CD4-positive, alpha-beta memory T cell (primary cell): ENCODE measurements at regions of chr11 and their contacts with region 1.

Region 1: GRCh38 chr11:117946842-117947526 is 17.8 kb upstream of the TMPRSS13 start:
- DNase-seq: peak; percentile 70 to 77 (median 72)
- H3K4me3 ChIP-seq: no peak overlapping the region
- H3K4me3 Mint-ChIP-seq: peak overlapping the region in 7 of 8 donors; percentile 7 to 85 (median 47)
- H3K27ac ChIP-seq: no peak overlapping the region
- H3K27ac Mint-ChIP-seq: peak overlapping the region; percentile 38 to 97 (median 82)
- H3K4me1 ChIP-seq: peaks cover 73% of the 10 kb centered on the region
- H3K4me1 Mint-ChIP-seq: peaks cover 54 to 83% (median 70%) of the 10 kb centered on the region in 4 donors
- H3K27me3 ChIP-seq: no peaks in the 10 kb centered on the region
- H3K27me3 Mint-ChIP-seq: no peaks in the 10 kb centered on the region

Region 2: GRCh38 chr11:117634756-117635603 is 312.0 kb before region 1 on chr11:
- CTCF ChIA-PET with region 1: no interaction called
- POLR2A ChIA-PET with region 1: no interaction called
- intact Hi-C with region 1: no loop called
- DNase-seq: no peak
- H3K4me3 ChIP-seq: no peak overlapping the region
- H3K4me3 Mint-ChIP-seq: peak overlapping the region in 1 of 8 donors; percentile 37
- H3K27ac ChIP-seq: no peak overlapping the region
- H3K27ac Mint-ChIP-seq: no peak overlapping the region
- H3K4me1 ChIP-seq: no peaks in the 10 kb centered on the region
- H3K4me1 Mint-ChIP-seq: no peaks in the 10 kb centered on the region
- H3K27me3 ChIP-seq: no peaks in the 10 kb centered on the region
- H3K27me3 Mint-ChIP-seq: peaks cover 7 to 8% of the 10 kb centered on the region in 2 donors

Region 3: GRCh38 chr11:117807482-117808327 is 139.3 kb before region 1 on chr11:
- CTCF ChIA-PET with region 1: interaction called, 173 read pairs
- POLR2A ChIA-PET with region 1: interaction called, 15 read pairs
- intact Hi-C with region 1: loop called (anchors 1 kb)
- DNase-seq: peak; percentile 58 to 70 (median 62)
- H3K4me3 ChIP-seq: no peak overlapping the region
- H3K4me3 Mint-ChIP-seq: no peak overlapping the region
- H3K27ac ChIP-seq: no peak overlapping the region
- H3K27ac Mint-ChIP-seq: peak overlapping the region in 1 of 7 donors; percentile 45
- H3K4me1 ChIP-seq: peaks cover 10% of the 10 kb centered on the region
- H3K4me1 Mint-ChIP-seq: peaks cover 7 to 17% (median 10%) of the 10 kb centered on the region in 4 donors
- H3K27me3 ChIP-seq: no peaks in the 10 kb centered on the region
- H3K27me3 Mint-ChIP-seq: peaks cover 0 to 3% of the 10 kb centered on the region in 2 donors

Region 4: DNA sequence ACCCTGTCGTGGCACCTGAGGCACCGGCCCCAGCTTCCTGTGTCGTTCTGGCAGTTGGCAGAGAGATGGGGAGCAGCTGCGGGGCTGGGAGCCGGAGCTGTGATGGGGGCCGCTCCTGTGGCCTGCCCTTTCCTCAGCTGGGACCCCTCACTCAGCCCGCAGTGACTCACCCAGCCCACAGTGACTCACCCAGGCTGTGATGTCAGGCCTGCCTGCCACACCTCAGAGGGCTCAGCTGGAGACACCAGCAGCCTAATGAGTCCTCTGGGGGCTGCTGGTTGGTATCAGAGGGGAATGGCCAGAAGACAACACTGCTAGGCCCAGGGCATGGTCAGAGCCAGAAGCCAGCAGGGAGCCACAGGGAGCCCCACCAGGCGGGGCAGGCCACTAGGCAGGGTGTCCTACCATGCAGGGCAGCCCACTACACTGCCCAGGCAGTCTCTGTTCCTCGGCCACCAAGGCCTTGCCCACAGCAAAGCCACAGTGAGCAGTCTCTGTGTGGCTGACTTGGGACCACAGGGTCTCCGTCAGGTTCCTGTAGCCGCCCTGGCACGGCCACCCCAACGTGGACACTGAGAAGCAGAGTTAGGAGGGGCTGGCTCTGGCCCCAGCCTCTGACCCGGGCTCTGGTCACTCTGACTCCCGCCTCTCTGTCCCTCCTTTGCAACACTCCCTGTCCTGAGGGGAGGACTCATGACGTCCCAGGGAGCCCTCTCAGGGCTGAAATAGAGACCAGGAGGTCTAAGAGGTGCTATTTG is 118.2 kb before region 1 on chr11:
- CTCF ChIA-PET with region 1: interaction called, 216 read pairs
- POLR2A ChIA-PET with region 1: interaction called, 21 read pairs
- intact Hi-C with region 1: loop called (anchors 1 kb)
- DNase-seq: peak; percentile 49 to 91 (median 59)
- H3K4me3 ChIP-seq: no peak overlapping the region
- H3K4me3 Mint-ChIP-seq: peak overlapping the region in 4 of 8 donors; percentile 24 to 65 (median 44)
- H3K27ac ChIP-seq: peak overlapping the region; percentile 44
- H3K27ac Mint-ChIP-seq: peak overlapping the region; percentile 65 to 87 (median 79)
- H3K4me1 ChIP-seq: peaks cover 40% of the 10 kb centered on the region
- H3K4me1 Mint-ChIP-seq: peaks cover 19 to 69% (median 40%) of the 10 kb centered on the region in 4 donors
- H3K27me3 ChIP-seq: no peaks in the 10 kb centered on the region
- H3K27me3 Mint-ChIP-seq: no peaks in the 10 kb centered on the region

Region 5: GRCh38 chr11:117851106-117851505 is 95.9 kb before region 1 on chr11:
- CTCF ChIA-PET with region 1: interaction called, 226 read pairs
- POLR2A ChIA-PET with region 1: interaction called, 4 read pairs
- intact Hi-C with region 1: no loop called
- DNase-seq: no peak
- H3K4me3 ChIP-seq: no peak overlapping the region
- H3K4me3 Mint-ChIP-seq: no peak overlapping the region
- H3K27ac ChIP-seq: no peak overlapping the region
- H3K27ac Mint-ChIP-seq: no peak overlapping the region
- H3K4me1 ChIP-seq: no peaks in the 10 kb centered on the region
- H3K4me1 Mint-ChIP-seq: peaks cover 6 to 7% (median 6%) of the 10 kb centered on the region in 4 donors
- H3K27me3 ChIP-seq: no peaks in the 10 kb centered on the region
- H3K27me3 Mint-ChIP-seq: peaks cover 8 to 9% of the 10 kb centered on the region in 2 donors

Region 6: DNA sequence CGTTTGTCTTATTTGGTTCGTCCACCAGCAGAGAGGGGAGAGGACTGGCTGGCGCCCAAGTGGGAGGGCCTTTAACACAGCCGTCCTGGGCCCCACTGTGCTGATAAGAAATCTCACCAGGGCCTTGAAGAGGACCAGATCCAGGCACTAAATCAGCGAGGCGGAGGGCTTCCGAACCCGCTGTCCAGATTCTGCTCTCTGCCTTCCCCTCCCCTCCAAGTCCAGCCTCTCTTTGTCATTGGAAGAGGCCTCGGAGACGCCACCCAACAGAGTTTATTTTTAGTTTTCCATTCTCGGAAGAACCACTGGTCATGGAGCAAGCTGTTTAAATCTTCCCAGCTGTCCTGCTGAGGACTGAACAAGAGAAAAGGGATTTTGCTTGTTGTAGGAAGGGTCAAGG is 61.2 kb before region 1 on chr11:
- CTCF ChIA-PET with region 1: no interaction called
- POLR2A ChIA-PET with region 1: no interaction called
- intact Hi-C with region 1: no loop called
- DNase-seq: no peak
- H3K4me3 ChIP-seq: no peak overlapping the region
- H3K4me3 Mint-ChIP-seq: no peak overlapping the region
- H3K27ac ChIP-seq: no peak overlapping the region
- H3K27ac Mint-ChIP-seq: no peak overlapping the region
- H3K4me1 ChIP-seq: no peaks in the 10 kb centered on the region
- H3K4me1 Mint-ChIP-seq: no peaks in the 10 kb centered on the region
- H3K27me3 ChIP-seq: peaks cover 3% of the 10 kb centered on the region
- H3K27me3 Mint-ChIP-seq: peaks cover 10 to 11% of the 10 kb centered on the region in 2 donors

Region 7: GRCh38 chr11:117959438-117960149 is 12.6 kb after region 1 on chr11:
- CTCF ChIA-PET with region 1: interaction called, 10 read pairs
- POLR2A ChIA-PET with region 1: interaction called, 20 read pairs
- intact Hi-C with region 1: no loop called
- DNase-seq: no peak
- H3K4me3 ChIP-seq: no peak overlapping the region
- H3K4me3 Mint-ChIP-seq: peak overlapping the region in 3 of 8 donors; percentile 10 to 68 (median 51)
- H3K27ac ChIP-seq: no peak overlapping the region
- H3K27ac Mint-ChIP-seq: peak overlapping the region in 4 of 7 donors; percentile 33 to 72 (median 35)
- H3K4me1 ChIP-seq: peaks cover 21% of the 10 kb centered on the region
- H3K4me1 Mint-ChIP-seq: peaks cover 31 to 59% (median 47%) of the 10 kb centered on the region in 4 donors
- H3K27me3 ChIP-seq: no peaks in the 10 kb centered on the region
- H3K27me3 Mint-ChIP-seq: no peaks in the 10 kb centered on the region

Region 8: DNA sequence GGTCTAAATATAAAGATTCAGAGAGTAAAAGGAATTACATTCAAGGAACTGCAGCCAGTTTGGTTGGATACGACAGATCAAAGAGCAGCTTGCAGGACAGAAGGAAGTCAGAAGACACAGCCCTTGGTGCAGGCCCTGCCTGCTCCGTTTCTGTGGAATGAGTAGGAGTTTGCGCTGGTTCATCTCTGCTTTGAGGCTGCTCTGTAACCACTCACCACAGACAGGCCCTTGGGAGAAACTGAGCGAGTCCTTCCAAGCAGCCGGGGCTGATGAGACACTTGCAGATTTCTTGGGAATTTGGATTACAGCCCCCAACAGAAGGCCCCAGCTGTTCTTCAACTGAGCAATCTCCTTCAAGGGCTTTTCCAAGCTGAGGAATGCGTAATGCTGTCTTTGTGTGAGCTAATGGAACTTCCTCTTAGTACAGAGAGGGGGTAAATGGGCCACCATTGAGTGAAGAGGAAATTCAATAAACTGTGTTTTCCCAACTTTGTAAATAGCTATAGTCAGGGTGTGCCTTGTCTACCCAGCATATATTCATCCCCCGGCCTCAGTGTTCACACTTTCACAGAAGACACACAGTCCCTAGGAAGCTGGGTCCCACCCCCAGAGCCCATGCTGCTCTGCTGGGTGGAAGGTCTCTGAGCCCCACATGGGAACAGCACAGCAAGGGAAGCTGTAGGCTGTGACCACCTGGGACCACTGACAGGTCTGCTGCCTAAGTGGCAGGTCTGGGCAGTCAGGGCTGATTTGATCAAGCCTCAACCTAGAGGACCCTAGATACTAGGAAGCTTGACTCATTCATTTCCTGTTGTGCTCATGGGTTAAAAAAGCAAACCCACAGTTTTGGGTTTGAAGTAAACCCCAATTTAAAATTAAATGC is 55.8 kb after region 1 on chr11:
- CTCF ChIA-PET with region 1: interaction called, 172 read pairs
- POLR2A ChIA-PET with region 1: interaction called, 1,750 read pairs
- intact Hi-C with region 1: loop called (anchors 1 kb)
- DNase-seq: peak; percentile 26 to 68 (median 32)
- H3K4me3 ChIP-seq: peak overlapping the region; percentile 5 to 14
- H3K4me3 Mint-ChIP-seq: peak overlapping the region; percentile 56 to 82 (median 70)
- H3K27ac ChIP-seq: peak overlapping the region; percentile 53
- H3K27ac Mint-ChIP-seq: peak overlapping the region; percentile 86 to 96 (median 91)
- H3K4me1 ChIP-seq: peaks cover 100% of the 10 kb centered on the region
- H3K4me1 Mint-ChIP-seq: peaks cover 76 to 100% (median 95%) of the 10 kb centered on the region in 4 donors
- H3K27me3 ChIP-seq: no peaks in the 10 kb centered on the region
- H3K27me3 Mint-ChIP-seq: no peaks in the 10 kb centered on the region

Region 9: GRCh38 chr11:118058311-118059245 is 111.6 kb after region 1 on chr11:
- CTCF ChIA-PET with region 1: interaction called, 400 read pairs
- POLR2A ChIA-PET with region 1: interaction called, 258 read pairs
- intact Hi-C with region 1: no loop called
- DNase-seq: no peak
- H3K4me3 ChIP-seq: no peak overlapping the region
- H3K4me3 Mint-ChIP-seq: no peak overlapping the region
- H3K27ac ChIP-seq: no peak overlapping the region
- H3K27ac Mint-ChIP-seq: no peak overlapping the region
- H3K4me1 ChIP-seq: peaks cover 1% of the 10 kb centered on the region
- H3K4me1 Mint-ChIP-seq: peaks cover 0 to 4% (median 2%) of the 10 kb centered on the region in 4 donors
- H3K27me3 ChIP-seq: no peaks in the 10 kb centered on the region
- H3K27me3 Mint-ChIP-seq: peaks cover 2 to 4% of the 10 kb centered on the region in 2 donors